Calu3 (cell line): ENCODE measurements at regions of chr2 and their contacts with region 1.

Region 1: DNA sequence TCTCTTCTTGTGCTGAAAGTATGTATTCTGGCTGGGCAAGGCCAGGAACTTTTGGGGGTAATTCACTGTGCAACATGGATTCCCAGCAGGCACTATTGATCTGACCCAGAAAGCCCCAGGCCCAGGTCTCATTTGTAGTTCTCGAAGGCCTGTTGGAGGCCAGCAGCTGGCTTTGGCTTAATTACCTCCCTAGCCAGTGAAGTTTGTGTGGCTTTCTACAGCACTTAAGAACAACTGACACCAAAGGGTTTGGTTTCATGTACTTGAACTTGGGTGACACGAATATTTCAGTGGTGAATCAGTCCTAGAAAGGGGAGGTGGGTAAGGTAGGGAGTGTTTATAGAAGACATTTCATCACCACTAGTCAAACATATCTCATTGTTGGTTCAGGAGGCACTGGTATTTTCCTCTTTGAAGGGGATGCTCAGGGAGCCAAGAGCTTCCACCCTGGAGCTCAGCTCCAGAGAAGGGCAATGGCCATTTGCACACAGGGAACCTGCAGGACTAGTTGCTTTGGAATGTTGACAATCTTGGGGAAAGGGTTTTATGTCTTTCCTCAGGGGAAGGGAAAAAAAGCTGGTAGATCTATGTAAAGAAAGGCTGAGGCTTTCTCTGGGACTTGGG is 217.7 kb downstream of the OSR1 start:
- DNase-seq: peak; percentile 66
- H3K4me3 Mint-ChIP-seq: peak overlapping the region; percentile 44
- H3K27ac Mint-ChIP-seq: peak overlapping the region; percentile 59
- H3K4me1 Mint-ChIP-seq: peaks cover 39% of the 10 kb centered on the region
- H3K27me3 Mint-ChIP-seq: no peaks in the 10 kb centered on the region
- CTCF ChIP-seq: no peak

Region 2: GRCh38 chr2:18987592-18988073 is 153.1 kb before region 1 on chr2:
- CTCF ChIA-PET with region 1: interaction called, 9 read pairs
- intact Hi-C with region 1: loop called (anchors 1 kb)
- DNase-seq: peak; percentile 64
- H3K4me3 Mint-ChIP-seq: no peak overlapping the region
- H3K27ac Mint-ChIP-seq: no peak overlapping the region
- H3K4me1 Mint-ChIP-seq: peaks cover 14% of the 10 kb centered on the region
- H3K27me3 Mint-ChIP-seq: no peaks in the 10 kb centered on the region
- CTCF ChIP-seq: no peak

Region 3: DNA sequence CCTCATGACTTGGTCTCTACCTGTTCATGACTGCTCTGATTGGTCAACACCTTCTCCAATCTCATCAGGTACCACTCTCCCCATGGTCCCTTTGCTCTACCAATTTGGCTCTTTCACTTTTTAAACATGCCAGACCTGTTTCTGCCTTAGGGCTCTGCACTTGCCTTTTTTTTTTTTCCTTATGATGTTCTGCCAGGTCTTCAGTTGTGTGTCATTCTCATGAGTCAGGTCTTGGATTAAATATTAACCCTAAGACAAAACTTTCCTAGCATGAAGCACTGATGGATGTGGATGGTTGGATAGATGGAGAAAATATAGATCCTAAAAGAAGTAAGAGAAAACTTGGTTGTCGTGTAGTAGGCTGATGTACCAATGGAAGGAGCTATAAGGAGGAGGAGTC is 541.8 kb after region 1 on chr2:
- CTCF ChIA-PET with region 1: no interaction called
- intact Hi-C with region 1: loop called (anchors 5 kb)
- DNase-seq: peak; percentile 28
- H3K4me3 Mint-ChIP-seq: no peak overlapping the region
- H3K27ac Mint-ChIP-seq: no peak overlapping the region
- H3K4me1 Mint-ChIP-seq: no peaks in the 10 kb centered on the region
- H3K27me3 Mint-ChIP-seq: no peaks in the 10 kb centered on the region
- CTCF ChIP-seq: no peak